Caco-2 (cell line): ENCODE measurements at regions of chr19 and their contacts with region 1.

Region 1: DNA sequence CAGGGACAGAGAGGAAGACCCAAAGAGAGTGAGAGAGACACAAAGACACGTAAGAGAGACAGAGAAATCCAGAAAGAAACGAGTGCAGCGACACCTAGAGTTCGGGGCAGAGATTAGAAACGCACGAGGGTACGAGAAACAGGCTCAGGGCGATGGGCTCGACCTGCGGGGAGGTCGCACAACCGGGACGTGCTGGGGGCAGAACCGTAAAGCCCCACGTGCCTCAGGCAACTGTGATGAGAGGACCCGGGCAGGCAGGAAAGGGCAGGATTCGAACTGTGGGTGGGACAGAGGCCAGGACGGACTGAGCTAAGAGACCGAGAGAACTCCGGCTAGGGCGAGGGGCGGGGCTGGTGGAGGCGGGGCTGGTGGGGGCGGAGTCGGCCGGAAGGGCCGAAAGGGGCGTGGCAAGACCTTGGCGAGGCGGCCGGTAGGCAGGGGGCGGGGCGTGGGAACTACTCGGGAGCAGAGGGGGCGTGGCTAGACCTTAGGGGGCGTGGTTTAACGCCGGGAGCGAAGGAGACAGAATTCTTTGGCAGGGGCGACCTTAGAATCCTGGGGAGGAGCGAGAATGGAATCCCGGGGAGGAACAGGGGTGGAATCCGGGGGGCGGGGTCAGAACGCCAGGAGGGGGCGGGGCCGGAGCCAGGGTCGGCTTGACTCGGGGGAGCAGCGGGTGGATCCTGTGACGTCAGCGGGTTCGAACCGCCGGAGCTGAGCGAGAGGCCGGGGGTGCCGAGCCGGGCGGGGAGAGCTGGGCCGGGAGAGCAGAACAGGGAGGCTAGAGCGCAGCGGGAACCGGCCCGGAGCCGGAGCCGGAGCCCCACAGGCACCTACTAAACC is at the start of gene NECTIN2:
- DNase-seq: peak; percentile 100
- H3K4me3 ChIP-seq: peak within 1 kb of the TSS; percentile 76
- H3K4me3 Mint-ChIP-seq: peak within 1 kb of the TSS; percentile 76
- H3K27ac Mint-ChIP-seq: peak within 1 kb of the TSS; percentile 98
- H3K4me1 ChIP-seq: peaks cover 35% of the 10 kb centered on the region
- H3K4me1 Mint-ChIP-seq: peaks cover 34% of the 10 kb centered on the region
- H3K27me3 ChIP-seq: no peaks in the 10 kb centered on the region
- H3K27me3 Mint-ChIP-seq: no peaks in the 10 kb centered on the region
- CTCF ChIP-seq: peak; percentile 73 to 76
- total RNA-seq, gene NECTIN2: 257 and 258 TPM in 2 replicates

Region 2: DNA sequence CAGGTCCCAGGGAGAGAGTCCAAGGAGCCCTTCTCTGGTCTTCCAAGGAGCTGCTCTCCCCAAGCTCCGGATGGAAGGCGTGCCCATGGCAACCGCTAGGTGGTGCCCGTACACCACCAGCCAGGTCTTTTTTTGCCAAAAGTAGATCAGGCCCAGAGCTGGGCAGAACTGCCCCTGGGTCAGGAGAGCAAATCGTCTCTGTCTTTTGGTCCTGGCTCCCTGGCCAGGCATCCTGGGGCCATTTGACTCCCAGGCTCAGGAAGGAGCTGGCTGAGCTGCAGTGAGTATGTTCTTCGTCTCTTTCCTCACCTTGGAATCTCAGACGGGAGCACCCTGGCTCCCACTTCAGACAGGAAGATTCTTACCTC is 121.9 kb before region 1 on chr19:
- CTCF ChIA-PET with region 1: interaction called, 13 read pairs
- POLR2A ChIA-PET with region 1: no interaction called
- intact Hi-C with region 1: loop called (anchors 1 kb)
- DNase-seq: peak; percentile 87 to 91
- H3K4me3 ChIP-seq: peak overlapping the region; percentile 15
- H3K4me3 Mint-ChIP-seq: peak overlapping the region; percentile 62
- H3K27ac Mint-ChIP-seq: peak overlapping the region; percentile 43
- H3K4me1 ChIP-seq: peaks cover 53% of the 10 kb centered on the region
- H3K4me1 Mint-ChIP-seq: peaks cover 47% of the 10 kb centered on the region
- H3K27me3 ChIP-seq: no peaks in the 10 kb centered on the region
- H3K27me3 Mint-ChIP-seq: no peaks in the 10 kb centered on the region
- CTCF ChIP-seq: peak; percentile 97 to 98

Region 3: DNA sequence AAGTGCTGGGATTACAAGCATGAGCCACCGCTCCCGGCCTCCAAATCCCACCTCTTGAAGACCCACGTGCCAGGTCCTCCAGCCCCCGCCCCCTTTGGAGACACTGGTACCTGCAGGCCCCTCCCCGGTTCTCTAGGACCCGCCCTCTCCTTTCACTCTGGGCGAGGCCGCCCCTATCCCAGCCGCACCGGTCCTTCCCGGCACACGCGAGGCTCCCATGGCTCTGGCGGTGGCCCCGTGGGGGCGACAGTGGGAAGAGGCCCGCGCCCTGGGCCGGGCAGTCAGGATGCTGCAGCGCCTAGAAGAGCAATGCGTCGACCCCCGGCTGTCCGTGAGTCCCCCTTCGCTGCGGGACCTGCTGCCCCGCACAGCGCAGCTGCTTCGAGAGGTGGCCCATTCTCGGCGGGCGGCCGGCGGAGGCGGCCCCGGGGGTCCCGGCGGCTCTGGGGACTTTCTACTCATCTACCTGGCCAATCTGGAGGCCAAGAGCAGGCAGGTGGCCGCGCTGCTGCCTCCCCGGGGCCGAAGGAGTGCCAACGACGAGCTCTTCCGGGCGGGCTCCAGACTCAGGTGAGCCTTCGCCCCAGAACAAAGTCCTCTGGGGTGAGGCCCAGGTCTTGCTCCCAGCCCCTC is 68.0 kb before region 1 on chr19 and contains the start of gene CBLC:
- CTCF ChIA-PET with region 1: interaction called, 9 read pairs
- POLR2A ChIA-PET with region 1: interaction called, 8 read pairs
- intact Hi-C with region 1: loop called (anchors 2 kb)
- DNase-seq: peak; percentile 97 to 98
- H3K4me3 ChIP-seq: peak within 1 kb of the TSS; percentile 83
- H3K4me3 Mint-ChIP-seq: peak within 1 kb of the TSS; percentile 73
- H3K27ac Mint-ChIP-seq: peak within 1 kb of the TSS; percentile 91
- H3K4me1 ChIP-seq: peaks cover 15% of the 10 kb centered on the region
- H3K4me1 Mint-ChIP-seq: peaks cover 5% of the 10 kb centered on the region
- H3K27me3 ChIP-seq: no peaks in the 10 kb centered on the region
- H3K27me3 Mint-ChIP-seq: no peaks in the 10 kb centered on the region
- CTCF ChIP-seq: peak in 1 of 2 experiments; percentile 38
- total RNA-seq, gene CBLC: 42.3 and 43.6 TPM in 2 replicates

Region 4: DNA sequence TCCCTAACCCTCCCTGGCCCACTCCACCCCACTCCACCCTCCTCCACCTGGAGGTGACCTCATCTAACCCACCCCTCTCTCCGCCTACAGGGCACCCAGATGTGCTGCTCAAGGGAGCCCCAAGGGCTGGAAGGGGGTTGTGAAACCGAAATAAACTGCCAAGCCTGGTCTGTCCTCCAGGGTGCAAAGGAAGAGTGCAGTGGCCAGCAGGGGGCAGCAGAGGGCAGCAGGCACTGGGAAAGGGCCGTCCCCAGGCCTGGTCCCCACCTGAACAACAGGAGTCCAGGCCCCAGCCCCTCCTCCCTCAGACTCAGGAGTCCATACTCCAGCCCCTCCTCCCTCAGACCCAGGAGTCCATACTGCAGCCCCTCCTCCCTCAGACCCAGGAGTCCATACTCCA is 45.4 kb before region 1 on chr19:
- CTCF ChIA-PET with region 1: interaction called, 5 read pairs
- POLR2A ChIA-PET with region 1: interaction called, 4 read pairs
- intact Hi-C with region 1: loop called (anchors 1 kb)
- DNase-seq: peak; percentile 91 to 95
- H3K4me3 ChIP-seq: no peak overlapping the region
- H3K4me3 Mint-ChIP-seq: no peak overlapping the region
- H3K27ac Mint-ChIP-seq: no peak overlapping the region
- H3K4me1 ChIP-seq: peaks cover 6% of the 10 kb centered on the region
- H3K4me1 Mint-ChIP-seq: peaks cover 16% of the 10 kb centered on the region
- H3K27me3 ChIP-seq: no peaks in the 10 kb centered on the region
- H3K27me3 Mint-ChIP-seq: no peaks in the 10 kb centered on the region
- CTCF ChIP-seq: peak; percentile 98 to 99

Region 5: GRCh38 chr19:44890366-44891015 is 44.7 kb after region 1 on chr19:
- CTCF ChIA-PET with region 1: interaction called, 7 read pairs
- POLR2A ChIA-PET with region 1: interaction called, 9 read pairs
- intact Hi-C with region 1: loop called (anchors 1 kb)
- DNase-seq: peak; percentile 100
- H3K4me3 ChIP-seq: peak overlapping the region; percentile 39
- H3K4me3 Mint-ChIP-seq: peak overlapping the region; percentile 79
- H3K27ac Mint-ChIP-seq: peak overlapping the region; percentile 91
- H3K4me1 ChIP-seq: peaks cover 9% of the 10 kb centered on the region
- H3K4me1 Mint-ChIP-seq: peaks cover 12% of the 10 kb centered on the region
- H3K27me3 ChIP-seq: no peaks in the 10 kb centered on the region
- H3K27me3 Mint-ChIP-seq: no peaks in the 10 kb centered on the region
- CTCF ChIP-seq: no peak